ENCODE measurements at regions of chr12 and their contacts with region 1.

Region 1: GRCh38 chr12:66087365-66087943 is 43.1 kb downstream of the LLPH start:
- DNase-seq: no peak

Region 2: GRCh38 chr12:65556681-65557437 is 530.6 kb before region 1 on chr12:
- intact Hi-C with region 1: loop called in 1 of 2 experiments (anchors 10 kb)
- DNase-seq: peak; percentile 92

Region 3: GRCh38 chr12:66047411-66048021 is 39.9 kb before region 1 on chr12:
- intact Hi-C with region 1: no loop called
- DNase-seq: no peak